GM12878 (cell line): ENCODE measurements at regions of chr7 and their contacts with region 1.

Region 1: DNA sequence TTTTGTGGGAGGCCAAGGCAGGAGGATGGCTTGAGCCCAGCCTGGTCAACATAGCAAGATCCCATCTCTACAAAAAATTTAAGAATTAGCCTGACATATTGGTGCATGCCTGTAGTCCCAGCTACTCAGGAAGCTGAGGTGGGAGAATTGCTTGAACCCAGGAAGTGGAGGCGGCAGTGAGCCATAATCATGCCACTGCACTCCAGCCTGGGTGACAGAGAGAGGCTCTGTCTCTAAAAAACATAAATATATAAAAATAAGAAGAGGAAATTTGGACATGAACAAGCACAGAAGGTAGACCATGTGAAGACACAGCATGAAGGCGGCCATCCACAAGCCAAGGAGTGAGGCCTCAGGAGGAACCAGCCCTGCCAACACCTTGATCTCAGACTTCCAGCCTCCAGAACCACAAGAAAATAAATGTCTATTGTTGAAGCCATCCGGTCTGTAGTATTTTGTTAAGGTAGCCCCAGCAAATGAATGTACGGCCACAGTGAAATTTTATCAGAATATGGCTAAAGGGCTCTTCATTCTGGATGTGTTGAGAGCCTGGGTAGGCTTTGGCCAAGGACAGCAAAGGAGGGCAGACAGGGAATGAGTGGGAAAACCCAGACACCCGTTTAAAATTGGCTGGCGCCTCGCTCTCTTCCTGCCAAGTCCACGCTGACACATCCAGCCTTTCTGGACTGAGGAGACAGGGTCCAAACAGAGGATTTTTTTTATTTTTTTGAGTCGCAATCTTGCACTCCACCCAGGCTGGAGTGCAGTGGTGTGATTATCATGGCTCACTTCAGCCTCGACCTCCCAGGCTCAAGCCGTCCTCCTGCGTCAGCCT is 12.9 kb upstream of the GRID2IP start:
- DNase-seq: no peak
- ATAC-seq: no peak
- H3K4me3 ChIP-seq: no peak overlapping the region
- H3K27ac ChIP-seq: no peak overlapping the region
- H3K4me1 ChIP-seq: no peaks in the 10 kb centered on the region
- H3K27me3 ChIP-seq: no peaks in the 10 kb centered on the region
- CTCF ChIP-seq: no peak
- EP300 ChIP-seq: no peak
- POLR2A ChIP-seq: no peak
- RAD21 ChIP-seq: no peak

Region 2: DNA sequence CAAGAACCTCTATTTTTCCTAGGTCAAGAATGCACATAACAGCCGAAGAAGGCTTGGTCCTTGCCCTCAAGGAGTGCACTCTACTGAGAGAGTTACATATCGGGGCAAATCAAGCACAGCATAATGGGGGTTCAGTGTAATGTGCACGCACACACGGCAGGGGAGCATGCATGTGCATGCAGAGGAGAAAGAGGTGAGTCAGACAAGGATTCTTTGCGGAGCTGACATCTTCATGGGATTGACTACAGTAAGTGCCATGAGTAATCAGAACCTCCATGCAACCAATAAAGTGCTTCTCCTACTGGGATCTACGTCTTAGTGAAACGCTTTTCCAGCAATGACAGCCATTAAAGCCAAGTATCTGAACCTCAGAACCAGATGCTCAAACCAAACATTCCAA is 906.3 kb before region 1 on chr7:
- CTCF ChIA-PET with region 1: no interaction called
- POLR2A ChIA-PET with region 1: interaction called, 11 read pairs
- RAD21 ChIA-PET with region 1: no interaction called
- SMC1A ChIA-PET with region 1: no interaction called
- in situ Hi-C with region 1: no loop called
- intact Hi-C with region 1: no loop called
- DNase-seq: no peak
- ATAC-seq: no peak
- H3K4me3 ChIP-seq: no peak overlapping the region
- H3K27ac ChIP-seq: no peak overlapping the region
- H3K4me1 ChIP-seq: peaks cover 9% of the 10 kb centered on the region
- H3K27me3 ChIP-seq: no peaks in the 10 kb centered on the region
- CTCF ChIP-seq: no peak
- EP300 ChIP-seq: no peak
- POLR2A ChIP-seq: no peak
- RAD21 ChIP-seq: no peak

Region 3: DNA sequence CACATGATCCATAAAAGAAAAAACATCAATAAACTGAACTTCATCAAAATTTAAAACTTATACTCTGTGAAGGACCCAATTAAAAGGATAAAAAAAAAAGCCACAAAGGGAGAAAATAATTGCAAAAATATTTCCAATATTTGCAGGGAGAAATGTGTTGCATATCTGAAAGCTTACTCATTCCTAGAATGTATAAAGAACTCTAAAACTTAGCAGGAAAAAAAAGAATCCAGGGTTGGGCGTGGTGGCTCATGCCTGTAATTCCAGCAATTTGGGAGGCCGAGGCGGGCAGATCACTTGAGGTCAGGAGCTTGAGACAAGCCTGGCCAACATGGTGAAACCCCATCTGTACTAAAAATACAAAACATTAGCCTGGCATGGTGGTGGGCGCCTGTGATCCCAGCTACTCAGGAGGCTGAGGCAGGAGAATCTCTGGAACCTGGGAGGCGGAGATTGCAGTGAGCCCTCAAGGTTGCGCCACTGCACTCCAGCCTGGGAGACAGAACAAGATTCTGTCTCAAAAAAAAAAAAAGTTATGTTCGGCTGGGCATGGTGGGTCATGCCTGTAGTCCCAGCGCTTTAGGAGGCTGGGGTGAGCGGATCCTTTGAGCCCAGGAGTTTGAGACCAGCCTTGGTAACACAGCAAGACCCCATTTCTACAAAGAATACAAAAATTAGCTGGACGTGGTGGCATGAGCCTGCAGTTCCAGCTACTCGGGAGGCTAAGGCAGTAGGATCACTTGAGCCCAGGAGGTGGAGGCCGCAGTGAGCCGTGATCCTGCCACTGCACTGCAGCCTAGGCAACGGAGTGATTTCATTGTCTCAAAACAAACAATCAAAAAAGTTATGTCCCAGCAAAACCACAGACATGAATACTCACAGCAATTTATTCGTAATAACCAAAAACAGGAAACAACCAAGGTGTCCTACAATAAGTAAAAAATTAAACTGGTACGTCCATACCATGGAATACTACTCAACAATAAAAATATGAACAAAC is 280.5 kb before region 1 on chr7:
- CTCF ChIA-PET with region 1: no interaction called
- POLR2A ChIA-PET with region 1: no interaction called
- RAD21 ChIA-PET with region 1: no interaction called
- SMC1A ChIA-PET with region 1: no interaction called
- in situ Hi-C with region 1: no loop called
- intact Hi-C with region 1: no loop called
- DNase-seq: no peak
- ATAC-seq: no peak; the same call in 1 of the 3 replicates
- H3K4me3 ChIP-seq: no peak overlapping the region
- H3K27ac ChIP-seq: no peak overlapping the region
- H3K4me1 ChIP-seq: no peaks in the 10 kb centered on the region
- H3K27me3 ChIP-seq: no peaks in the 10 kb centered on the region
- CTCF ChIP-seq: no peak
- EP300 ChIP-seq: no peak
- POLR2A ChIP-seq: no peak
- RAD21 ChIP-seq: no peak

Region 4: GRCh38 chr7:6553448-6554044 is 10.6 kb before region 1 on chr7:
- CTCF ChIA-PET with region 1: no interaction called
- POLR2A ChIA-PET with region 1: no interaction called
- RAD21 ChIA-PET with region 1: no interaction called
- SMC1A ChIA-PET with region 1: no interaction called
- in situ Hi-C with region 1: no loop called
- intact Hi-C with region 1: no loop called
- DNase-seq: no peak
- ATAC-seq: peak; percentile 34
- H3K4me3 ChIP-seq: no peak overlapping the region
- H3K27ac ChIP-seq: no peak overlapping the region
- H3K4me1 ChIP-seq: no peaks in the 10 kb centered on the region
- H3K27me3 ChIP-seq: no peaks in the 10 kb centered on the region
- CTCF ChIP-seq: peak in 1 of 3 experiments; percentile 13; a peak in 1 of 6 replicates
- EP300 ChIP-seq: no peak
- POLR2A ChIP-seq: no peak
- RAD21 ChIP-seq: no peak

Region 5: DNA sequence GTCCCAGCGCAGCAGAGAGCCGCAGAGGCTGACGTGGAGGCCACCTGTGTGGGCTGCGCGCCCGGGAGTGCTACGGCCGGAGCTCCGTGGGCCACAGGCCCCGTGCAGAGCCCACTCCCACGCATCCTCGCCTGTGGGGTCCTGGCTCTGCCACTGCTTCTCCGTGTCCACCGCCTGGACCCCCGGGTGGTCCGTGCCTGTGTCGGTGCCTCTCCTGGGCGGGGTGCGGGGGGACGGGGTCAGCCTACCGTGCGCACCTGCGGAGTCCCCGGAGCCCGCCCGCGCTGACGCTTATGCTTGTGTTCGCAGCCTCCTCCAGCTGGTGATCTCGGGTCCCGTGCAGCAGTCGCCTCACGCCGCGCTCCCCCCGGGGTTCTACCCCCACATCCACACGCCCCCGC is 43.5 kb after region 1 on chr7:
- CTCF ChIA-PET with region 1: no interaction called
- POLR2A ChIA-PET with region 1: no interaction called
- RAD21 ChIA-PET with region 1: no interaction called
- SMC1A ChIA-PET with region 1: no interaction called
- in situ Hi-C with region 1: no loop called
- intact Hi-C with region 1: no loop called
- DNase-seq: no peak
- ATAC-seq: no peak
- H3K4me3 ChIP-seq: no peak overlapping the region
- H3K27ac ChIP-seq: no peak overlapping the region
- H3K4me1 ChIP-seq: no peaks in the 10 kb centered on the region; the same call in 1 of the 2 replicates
- H3K27me3 ChIP-seq: no peaks in the 10 kb centered on the region
- CTCF ChIP-seq: no peak
- EP300 ChIP-seq: no peak
- POLR2A ChIP-seq: no peak
- RAD21 ChIP-seq: no peak